PC-9 (cell line): ENCODE measurements at regions of chr2 and their contacts with region 1.

Region 1: DNA sequence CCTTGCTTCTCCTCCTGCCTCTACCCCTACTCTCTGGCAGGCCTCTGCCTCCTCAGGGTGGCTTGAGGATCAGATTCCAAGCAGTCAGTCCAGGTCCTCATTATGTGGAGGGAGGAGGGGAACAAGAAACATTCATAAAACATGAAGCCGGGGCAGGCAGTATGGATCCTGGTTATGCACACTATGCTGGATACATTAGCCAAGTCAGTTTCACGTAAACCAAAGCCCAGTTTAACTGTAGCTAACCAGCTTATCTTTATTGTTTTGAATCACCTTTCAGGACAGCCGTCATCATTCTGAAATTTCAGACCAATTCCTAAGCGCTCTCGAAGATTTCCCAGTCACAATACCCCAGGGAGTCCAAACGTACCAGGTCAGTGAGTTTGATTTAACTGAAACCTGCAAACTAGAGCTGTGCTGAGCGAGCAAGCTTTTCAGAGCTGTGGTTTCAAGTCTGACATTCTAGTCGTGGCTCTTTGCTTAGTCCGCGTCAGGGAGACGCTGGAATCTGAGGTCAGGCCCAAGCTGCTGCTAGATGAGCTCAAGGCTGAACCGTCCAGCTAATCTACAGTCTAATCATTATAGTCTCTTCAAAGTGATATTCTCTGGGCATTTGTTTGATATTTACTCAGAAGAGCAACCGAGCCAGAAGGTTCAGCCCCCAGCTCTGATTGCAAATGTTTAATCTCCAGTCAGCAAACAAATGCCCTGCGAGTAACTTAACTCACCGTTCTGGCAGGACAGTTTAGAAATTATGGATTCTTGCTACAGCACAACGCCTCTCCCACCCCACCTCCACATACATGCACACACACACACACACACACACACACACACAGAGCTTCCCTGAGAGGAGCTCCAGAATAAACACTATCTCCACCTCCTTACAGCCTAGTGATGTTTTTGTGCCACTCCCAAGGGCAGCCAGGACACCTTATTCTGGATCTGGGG is 63.8 kb upstream of the BZW1 start:
- DNase-seq: peak in 1 of 2 experiments; percentile 17
- H3K4me3 ChIP-seq: no peak overlapping the region
- H3K27ac ChIP-seq: no peak overlapping the region
- H3K4me1 ChIP-seq: peaks cover 11% of the 10 kb centered on the region
- H3K27me3 ChIP-seq: no peaks in the 10 kb centered on the region
- CTCF ChIP-seq: no peak

Region 2: GRCh38 chr2:200779214-200779613 is 31.3 kb after region 1 on chr2:
- CTCF ChIA-PET with region 1: no interaction called
- POLR2A ChIA-PET with region 1: interaction called, 16 read pairs
- intact Hi-C with region 1: no loop called
- DNase-seq: no peak
- H3K4me3 ChIP-seq: no peak overlapping the region
- H3K27ac ChIP-seq: no peak overlapping the region
- H3K4me1 ChIP-seq: peaks cover 77% of the 10 kb centered on the region
- H3K27me3 ChIP-seq: no peaks in the 10 kb centered on the region
- CTCF ChIP-seq: no peak

Region 3: DNA sequence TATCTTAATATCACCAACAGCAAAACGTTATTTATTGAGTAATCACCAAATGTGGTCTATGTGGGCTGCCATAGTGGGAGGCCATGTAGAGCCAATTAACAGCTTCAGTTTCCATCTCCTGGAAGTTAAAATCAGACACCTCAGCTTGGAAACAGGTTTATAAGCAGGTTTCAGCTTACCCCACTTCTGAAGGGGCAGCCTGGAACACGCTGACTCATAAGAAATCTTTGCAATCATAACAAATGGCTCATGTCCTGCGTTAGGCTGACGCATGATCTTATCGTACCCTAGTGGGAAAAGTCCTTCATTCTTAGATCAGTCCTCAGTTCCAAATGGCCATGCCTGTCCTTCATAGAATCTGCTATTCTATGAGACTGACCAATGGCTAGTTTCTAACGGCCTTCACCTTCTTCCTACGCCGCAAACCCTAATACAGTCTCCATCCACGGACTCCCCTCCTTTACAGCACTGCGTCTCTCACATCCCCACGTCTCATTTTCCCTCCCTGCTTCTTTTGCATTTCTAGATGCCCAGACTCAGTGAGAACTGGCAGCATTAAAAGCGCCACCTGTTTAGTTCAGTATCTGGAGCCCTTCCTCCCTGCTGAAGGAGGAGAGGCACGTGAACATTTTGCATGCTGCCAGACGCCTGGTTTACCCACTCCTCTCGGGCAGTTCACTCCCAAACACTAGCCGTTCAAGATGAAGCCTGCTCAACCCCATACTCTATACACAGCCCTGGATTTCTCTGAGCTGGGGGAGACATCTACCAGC is 39.6 kb after region 1 on chr2:
- CTCF ChIA-PET with region 1: no interaction called
- POLR2A ChIA-PET with region 1: no interaction called
- intact Hi-C with region 1: loop called (anchors 5 kb)
- DNase-seq: peak; percentile 68 to 96
- H3K4me3 ChIP-seq: peak overlapping the region; percentile 47; the same call in 1 of the 2 replicates
- H3K27ac ChIP-seq: peak overlapping the region; percentile 99
- H3K4me1 ChIP-seq: peaks cover 72% of the 10 kb centered on the region
- H3K27me3 ChIP-seq: no peaks in the 10 kb centered on the region
- CTCF ChIP-seq: no peak

Region 4: DNA sequence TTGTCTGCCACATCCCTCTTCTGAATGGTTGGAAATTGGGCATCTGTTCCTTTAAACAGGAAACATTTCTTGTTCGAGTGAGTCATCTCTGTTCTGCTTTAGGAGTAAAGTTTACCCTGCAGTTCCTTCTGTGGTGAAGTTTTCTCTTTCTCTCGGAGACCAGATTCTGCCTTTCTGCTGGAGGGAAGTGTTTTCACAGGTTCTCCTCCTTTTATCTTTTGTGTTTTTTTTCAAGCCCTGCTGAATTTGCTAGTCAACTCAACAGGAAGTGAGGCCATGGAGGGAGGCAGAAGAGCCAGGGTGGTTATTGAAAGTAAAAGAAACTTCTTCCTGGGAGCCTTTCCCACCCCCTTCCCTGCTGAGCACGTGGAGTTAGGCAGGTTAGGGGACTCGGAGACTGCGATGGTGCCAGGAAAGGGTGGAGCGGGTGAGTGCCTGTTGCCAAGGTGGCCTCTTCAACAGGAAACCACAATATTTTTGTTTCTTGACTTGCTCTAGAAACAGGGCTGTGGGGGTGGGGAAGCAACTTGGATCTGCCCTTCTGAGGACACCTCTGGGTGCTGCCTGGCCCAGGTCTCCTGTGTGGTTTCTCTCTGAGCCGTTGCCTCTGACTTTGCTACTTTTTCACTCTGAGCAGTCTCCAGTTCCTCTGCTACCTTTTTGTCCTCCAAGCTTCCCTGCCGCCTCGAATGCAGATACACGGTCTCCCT is 510.2 kb after region 1 on chr2:
- CTCF ChIA-PET with region 1: no interaction called
- POLR2A ChIA-PET with region 1: no interaction called
- intact Hi-C with region 1: no loop called
- DNase-seq: peak; percentile 86 to 91
- H3K4me3 ChIP-seq: peak overlapping the region; percentile 59
- H3K27ac ChIP-seq: peak overlapping the region; percentile 94
- H3K4me1 ChIP-seq: peaks cover 38% of the 10 kb centered on the region
- H3K27me3 ChIP-seq: no peaks in the 10 kb centered on the region
- CTCF ChIP-seq: no peak